CD8-positive, alpha-beta T cell (primary cell): ENCODE measurements at regions of chr4 and their contacts with region 1.

Region 1: GRCh38 chr4:22688236-22688635 is 4.5 kb upstream of the GBA3 start:
- DNase-seq: no peak
- ATAC-seq: no peak
- H3K4me3 ChIP-seq: no peak overlapping the region
- H3K4me3 Mint-ChIP-seq: no peak overlapping the region
- H3K27ac ChIP-seq: no peak overlapping the region
- H3K27ac Mint-ChIP-seq: no peak overlapping the region
- H3K4me1 ChIP-seq: peaks cover 8% of the 10 kb centered on the region
- H3K4me1 Mint-ChIP-seq: peaks cover 17% of the 10 kb centered on the region
- H3K27me3 ChIP-seq: no peaks in the 10 kb centered on the region
- H3K27me3 Mint-ChIP-seq: no peaks in the 10 kb centered on the region
- CTCF ChIP-seq: no peak

Region 2: DNA sequence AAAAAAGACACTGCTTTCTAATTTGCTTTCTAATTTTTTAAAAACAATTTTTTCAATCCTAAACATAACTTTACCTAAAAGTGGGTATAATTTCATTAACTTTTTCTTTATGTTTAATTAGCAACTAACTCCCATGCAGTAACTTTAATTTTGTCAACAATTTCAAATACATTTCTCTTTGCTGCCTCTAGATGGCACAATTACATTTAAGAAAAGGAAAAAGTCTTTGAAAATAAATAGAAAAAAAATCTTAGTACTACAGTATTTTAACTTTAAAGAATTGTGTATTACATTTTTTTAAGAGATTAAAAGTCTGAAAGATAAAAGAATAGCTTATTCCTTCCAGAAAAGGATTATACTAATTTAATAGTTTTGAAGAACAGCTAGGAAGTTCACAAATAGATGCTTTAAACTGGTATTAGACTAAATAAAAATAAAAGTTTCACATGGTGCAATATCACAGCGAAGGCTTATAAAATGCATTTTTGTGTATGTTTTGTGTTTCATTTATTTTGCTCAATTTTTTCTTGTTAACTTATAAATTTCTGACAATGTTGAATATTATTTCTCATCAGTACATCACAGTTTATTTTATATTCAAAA is 277.5 kb before region 1 on chr4:
- CTCF ChIA-PET with region 1: interaction called, 37 read pairs
- POLR2A ChIA-PET with region 1: interaction called, 3 read pairs
- intact Hi-C with region 1: loop called (anchors 1 kb)
- DNase-seq: peak in 1 of 9 experiments; percentile 14
- ATAC-seq: no peak
- H3K4me3 ChIP-seq: no peak overlapping the region
- H3K4me3 Mint-ChIP-seq: no peak overlapping the region
- H3K27ac ChIP-seq: no peak overlapping the region
- H3K27ac Mint-ChIP-seq: no peak overlapping the region
- H3K4me1 ChIP-seq: no peaks in the 10 kb centered on the region
- H3K4me1 Mint-ChIP-seq: no peaks in the 10 kb centered on the region
- H3K27me3 ChIP-seq: no peaks in the 10 kb centered on the region
- H3K27me3 Mint-ChIP-seq: no peaks in the 10 kb centered on the region
- CTCF ChIP-seq: peak; percentile 94

Region 3: GRCh38 chr4:22703912-22704311 is 15.7 kb after region 1 on chr4:
- CTCF ChIA-PET with region 1: no interaction called
- POLR2A ChIA-PET with region 1: no interaction called
- intact Hi-C with region 1: no loop called
- DNase-seq: no peak
- ATAC-seq: no peak
- H3K4me3 ChIP-seq: no peak overlapping the region
- H3K4me3 Mint-ChIP-seq: no peak overlapping the region
- H3K27ac ChIP-seq: no peak overlapping the region
- H3K27ac Mint-ChIP-seq: no peak overlapping the region
- H3K4me1 ChIP-seq: no peaks in the 10 kb centered on the region
- H3K4me1 Mint-ChIP-seq: no peaks in the 10 kb centered on the region
- H3K27me3 ChIP-seq: no peaks in the 10 kb centered on the region
- H3K27me3 Mint-ChIP-seq: peaks cover 3% of the 10 kb centered on the region
- CTCF ChIP-seq: no peak

Region 4: DNA sequence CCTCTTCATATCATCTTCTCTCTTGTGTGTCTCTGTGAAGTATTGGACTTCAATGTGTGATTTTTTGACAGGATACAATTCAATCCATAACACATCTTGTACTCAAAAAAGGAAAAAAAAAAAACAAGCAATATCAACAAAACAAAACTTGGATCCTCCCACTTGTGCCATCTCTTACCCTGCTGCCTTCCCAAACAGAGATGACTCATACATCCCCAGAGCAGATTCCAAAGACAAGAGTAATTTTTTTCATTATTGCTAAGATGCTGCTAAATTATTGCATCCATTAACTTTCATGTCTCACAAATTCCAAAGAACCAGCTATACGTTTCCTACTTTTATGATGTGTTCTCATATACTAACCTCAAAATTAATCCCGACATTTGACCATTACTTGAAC is 483.7 kb after region 1 on chr4:
- CTCF ChIA-PET with region 1: no interaction called
- POLR2A ChIA-PET with region 1: no interaction called
- intact Hi-C with region 1: no loop called
- DNase-seq: no peak
- ATAC-seq: no peak
- H3K4me3 ChIP-seq: no peak overlapping the region
- H3K4me3 Mint-ChIP-seq: no peak overlapping the region
- H3K27ac ChIP-seq: no peak overlapping the region
- H3K27ac Mint-ChIP-seq: no peak overlapping the region
- H3K4me1 ChIP-seq: no peaks in the 10 kb centered on the region
- H3K4me1 Mint-ChIP-seq: no peaks in the 10 kb centered on the region
- H3K27me3 ChIP-seq: no peaks in the 10 kb centered on the region
- H3K27me3 Mint-ChIP-seq: peaks cover 2% of the 10 kb centered on the region
- CTCF ChIP-seq: no peak